Transverse colon (tissue), 4 donors: ENCODE measurements at regions of chr13 and their contacts with region 1.

Region 1: GRCh38 chr13:91491984-91492383 is 93.6 kb downstream of the GPC5 start:
- DNase-seq: no peak
- H3K4me3 ChIP-seq: no peak overlapping the region
- H3K27ac ChIP-seq: no peak overlapping the region
- H3K4me1 ChIP-seq: no peaks in the 10 kb centered on the region
- H3K27me3 ChIP-seq: no peaks in the 10 kb centered on the region
- CTCF ChIP-seq: no peak
- EP300 ChIP-seq: no peak
- POLR2A ChIP-seq: no peak

Region 2: GRCh38 chr13:91468301-91468700 is 23.7 kb before region 1 on chr13:
- in situ Hi-C with region 1: no loop called
- intact Hi-C with region 1: loop called (anchors 1 kb)
- DNase-seq: no peak
- H3K4me3 ChIP-seq: no peak overlapping the region
- H3K27ac ChIP-seq: no peak overlapping the region
- H3K4me1 ChIP-seq: no peaks in the 10 kb centered on the region
- H3K27me3 ChIP-seq: no peaks in the 10 kb centered on the region
- CTCF ChIP-seq: no peak
- EP300 ChIP-seq: no peak
- POLR2A ChIP-seq: no peak